Posterior cingulate gyrus (tissue), 11 donors: ENCODE measurements at regions of chr3 and their contacts with region 1.

Region 1: GRCh38 chr3:108552267-108553159 is 36.7 kb downstream of the CIP2A start:
- DNase-seq: no peak

Region 2: GRCh38 chr3:108062051-108062450 is 490.5 kb before region 1 on chr3:
- intact Hi-C with region 1: no loop called
- DNase-seq: no peak

Region 3: DNA sequence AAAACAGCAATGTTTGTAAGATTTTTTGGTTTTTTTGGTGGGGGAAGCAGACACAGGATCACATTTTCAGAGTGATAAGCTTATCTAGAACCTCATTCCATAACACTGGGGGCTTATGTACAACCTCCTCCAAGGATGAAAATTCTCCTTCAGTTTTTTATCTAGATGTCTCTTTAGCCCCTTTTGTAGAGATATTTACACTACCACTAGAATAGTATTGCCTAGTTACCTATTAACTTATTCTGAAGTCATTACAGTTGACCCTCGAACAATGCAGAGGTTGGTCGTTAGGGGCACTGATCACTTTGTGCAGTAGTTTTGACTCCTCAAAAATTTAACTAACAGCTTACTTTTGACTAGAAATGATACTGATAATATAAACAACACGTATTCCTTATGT is 363.1 kb before region 1 on chr3:
- intact Hi-C with region 1: no loop called
- DNase-seq: no peak

Region 4: GRCh38 chr3:108489771-108490170 is 62.7 kb before region 1 on chr3:
- intact Hi-C with region 1: loop called (anchors 1 kb)
- DNase-seq: peak in 1 of 10 donors; percentile 33

Region 5: GRCh38 chr3:108623504-108623903 is 71.0 kb after region 1 on chr3:
- intact Hi-C with region 1: no loop called
- DNase-seq: peak in 1 of 10 donors; percentile 44